OCI-LY7 (cell line): ENCODE measurements at regions of chr10 and their contacts with region 1.

Region 1: DNA sequence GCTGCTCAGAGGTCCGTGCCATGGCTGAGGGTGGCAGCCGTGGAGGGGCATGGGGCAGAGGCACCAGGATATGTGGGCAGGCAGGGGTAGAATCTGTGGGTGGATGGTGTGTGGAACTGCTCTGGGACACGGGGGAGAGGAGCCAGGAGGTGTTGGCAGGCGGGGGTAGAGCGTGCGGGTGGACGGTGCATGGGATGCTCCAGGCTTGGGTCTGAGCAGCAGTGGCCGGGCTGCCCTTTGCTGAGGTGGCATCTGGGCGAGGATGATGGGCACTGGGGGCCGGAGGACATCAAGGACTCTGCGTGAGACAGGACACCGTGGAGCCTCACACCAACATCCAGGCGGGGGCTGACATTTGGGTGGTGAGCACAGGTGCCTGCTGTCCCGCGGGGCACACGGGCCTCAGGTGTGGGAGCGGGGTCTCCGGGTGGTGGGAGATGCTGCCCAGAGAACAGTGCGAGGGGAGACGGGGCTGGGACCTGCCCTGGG is 46.2 kb downstream of the JAKMIP3 start:
- DNase-seq: no peak
- H3K4me3 ChIP-seq: no peak overlapping the region
- H3K27ac ChIP-seq: no peak overlapping the region
- H3K4me1 ChIP-seq: no peaks in the 10 kb centered on the region
- CTCF ChIP-seq: no peak

Region 2: GRCh38 chr10:132130286-132131265 is 18.7 kb after region 1 on chr10:
- CTCF ChIA-PET with region 1: interaction called, 12 read pairs
- POLR2A ChIA-PET with region 1: no interaction called
- intact Hi-C with region 1: no loop called
- DNase-seq: no peak
- H3K4me3 ChIP-seq: no peak overlapping the region
- H3K27ac ChIP-seq: no peak overlapping the region
- H3K4me1 ChIP-seq: no peaks in the 10 kb centered on the region
- CTCF ChIP-seq: no peak